Common myeloid progenitor, CD34-positive (primary cell): ENCODE measurements at regions of chr14 and their contacts with region 1.

Region 1: DNA sequence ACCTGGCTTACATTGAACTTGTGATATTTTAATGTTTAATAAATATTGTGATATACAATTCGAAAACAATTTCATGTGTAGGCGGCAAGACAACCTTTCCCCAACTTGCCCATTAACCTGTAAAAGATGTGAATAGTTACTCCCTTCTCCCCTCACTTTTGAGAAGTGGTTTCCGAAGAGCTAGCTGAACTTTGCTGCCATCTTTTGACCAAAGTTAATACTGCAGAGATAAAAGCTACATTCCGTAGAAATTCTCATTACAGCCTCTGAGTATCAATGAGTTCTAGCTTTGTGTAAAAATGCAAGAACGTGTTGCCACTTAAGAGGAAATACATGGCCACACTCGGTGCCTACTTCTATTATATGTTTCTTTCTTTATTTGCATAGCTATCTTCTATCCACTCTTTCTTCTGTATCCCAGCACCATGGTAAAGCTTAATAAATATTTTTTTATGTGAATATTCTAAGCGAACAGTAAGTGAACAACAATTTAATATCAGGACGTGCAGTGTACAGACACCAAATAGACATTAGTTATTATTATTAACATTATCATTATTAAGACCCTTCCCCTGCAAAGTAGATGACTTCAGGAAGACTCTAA is 105.1 kb upstream of the TMEM260 start:
- DNase-seq: peak; percentile 44 to 72 (median 64)
- H3K4me3 ChIP-seq: no peak overlapping the region
- H3K27ac ChIP-seq: no peak overlapping the region
- H3K4me1 ChIP-seq: no peaks in the 10 kb centered on the region
- H3K27me3 ChIP-seq: no peaks in the 10 kb centered on the region

Region 2: GRCh38 chr14:55707365-55707804 is 767.1 kb before region 1 on chr14:
- CTCF ChIA-PET with region 1: interaction called, 31 read pairs
- POLR2A ChIA-PET with region 1: no interaction called
- DNase-seq: peak; percentile 40 to 66 (median 65)
- H3K4me3 ChIP-seq: no peak overlapping the region
- H3K27ac ChIP-seq: no peak overlapping the region
- H3K4me1 ChIP-seq: no peaks in the 10 kb centered on the region
- H3K27me3 ChIP-seq: no peaks in the 10 kb centered on the region

Region 3: DNA sequence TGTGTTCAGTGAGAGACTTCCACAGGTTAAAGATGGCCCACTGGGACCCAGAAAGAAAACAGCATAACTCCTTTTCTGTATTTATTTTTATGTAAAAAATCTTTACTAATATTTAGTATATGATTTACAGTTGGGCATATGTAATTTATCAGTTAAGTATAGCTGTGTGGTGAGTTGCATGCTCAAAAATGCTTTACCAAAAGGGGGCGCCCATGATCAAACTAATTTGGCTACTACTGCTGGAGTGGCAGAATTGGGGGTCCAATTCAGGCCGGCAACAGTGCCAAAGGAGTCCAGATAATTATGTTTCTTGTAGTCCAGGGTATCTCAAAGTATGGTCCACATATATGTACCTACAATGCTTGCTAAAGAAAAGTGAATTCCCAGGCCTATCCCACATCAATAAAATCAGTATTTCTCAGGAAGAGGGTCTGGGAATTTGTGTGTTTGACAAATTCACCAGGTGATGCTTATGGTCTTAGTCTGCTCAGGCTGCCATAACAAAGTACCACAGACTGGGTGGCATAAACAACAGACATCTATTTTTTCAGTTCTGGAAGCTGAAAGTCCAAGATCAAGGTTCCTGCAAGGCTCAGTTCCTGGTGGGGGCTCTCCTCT is 742.5 kb before region 1 on chr14:
- CTCF ChIA-PET with region 1: interaction called, 33 read pairs
- POLR2A ChIA-PET with region 1: no interaction called
- DNase-seq: peak; percentile 44 to 68 (median 56)
- H3K4me3 ChIP-seq: no peak overlapping the region
- H3K27ac ChIP-seq: no peak overlapping the region
- H3K4me1 ChIP-seq: peaks cover 0 to 7% (median 4%) of the 10 kb centered on the region in 4 experiments
- H3K27me3 ChIP-seq: no peaks in the 10 kb centered on the region

Region 4: DNA sequence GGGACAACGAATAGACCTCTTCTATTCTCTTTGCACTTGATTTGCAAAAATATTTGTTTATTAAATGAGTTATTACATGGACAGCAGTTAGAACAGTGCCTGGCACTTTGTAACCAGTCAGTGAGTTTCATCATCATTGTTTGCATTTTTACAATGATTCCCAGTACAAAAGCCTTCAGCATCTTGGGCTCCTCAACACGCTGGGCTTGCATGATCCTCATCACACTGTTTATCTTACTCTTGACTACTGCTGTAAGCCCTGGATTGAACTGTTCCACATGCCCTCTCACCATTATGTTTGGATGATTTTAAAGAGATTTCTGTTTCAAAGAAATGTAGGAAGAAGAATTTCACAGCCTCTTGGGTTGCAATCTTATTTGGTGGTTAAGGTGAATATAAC is 152.0 kb before region 1 on chr14:
- CTCF ChIA-PET with region 1: no interaction called
- POLR2A ChIA-PET with region 1: no interaction called
- DNase-seq: no peak
- H3K4me3 ChIP-seq: no peak overlapping the region
- H3K27ac ChIP-seq: no peak overlapping the region
- H3K4me1 ChIP-seq: peaks cover 0 to 4% (median 2%) of the 10 kb centered on the region in 4 experiments
- H3K27me3 ChIP-seq: no peaks in the 10 kb centered on the region

Region 5: DNA sequence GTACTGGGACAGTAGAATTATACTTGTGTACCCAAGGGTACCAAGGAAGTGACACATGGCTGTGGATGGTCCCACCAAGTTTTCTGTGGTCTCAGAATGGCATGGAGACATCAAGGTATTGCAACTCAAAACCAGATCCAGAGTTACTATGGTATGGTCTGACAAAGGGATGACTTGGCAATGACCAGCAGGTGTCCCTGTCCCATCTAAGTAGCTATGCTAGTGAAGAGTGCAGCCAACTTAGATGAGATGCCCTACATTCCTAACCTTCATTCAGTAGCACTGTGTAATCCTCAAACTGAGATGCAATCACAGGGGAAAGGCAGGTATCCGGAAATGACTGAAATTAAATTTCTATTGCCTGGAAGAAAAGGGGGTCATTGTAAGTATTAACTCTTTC is 83.7 kb before region 1 on chr14:
- CTCF ChIA-PET with region 1: interaction called, 15 read pairs
- POLR2A ChIA-PET with region 1: no interaction called
- DNase-seq: peak; percentile 31 to 62 (median 53)
- H3K4me3 ChIP-seq: no peak overlapping the region
- H3K27ac ChIP-seq: no peak overlapping the region
- H3K4me1 ChIP-seq: no peaks in the 10 kb centered on the region
- H3K27me3 ChIP-seq: no peaks in the 10 kb centered on the region

Region 6: GRCh38 chr14:56487090-56487667 is 12.7 kb after region 1 on chr14:
- CTCF ChIA-PET with region 1: interaction called, 20 read pairs
- POLR2A ChIA-PET with region 1: no interaction called
- DNase-seq: no peak
- H3K4me3 ChIP-seq: no peak overlapping the region
- H3K27ac ChIP-seq: no peak overlapping the region
- H3K4me1 ChIP-seq: peaks cover 0 to 5% (median 0%) of the 10 kb centered on the region in 4 experiments
- H3K27me3 ChIP-seq: peaks cover 0 to 1% (median 0%) of the 10 kb centered on the region in 5 experiments

Region 7: DNA sequence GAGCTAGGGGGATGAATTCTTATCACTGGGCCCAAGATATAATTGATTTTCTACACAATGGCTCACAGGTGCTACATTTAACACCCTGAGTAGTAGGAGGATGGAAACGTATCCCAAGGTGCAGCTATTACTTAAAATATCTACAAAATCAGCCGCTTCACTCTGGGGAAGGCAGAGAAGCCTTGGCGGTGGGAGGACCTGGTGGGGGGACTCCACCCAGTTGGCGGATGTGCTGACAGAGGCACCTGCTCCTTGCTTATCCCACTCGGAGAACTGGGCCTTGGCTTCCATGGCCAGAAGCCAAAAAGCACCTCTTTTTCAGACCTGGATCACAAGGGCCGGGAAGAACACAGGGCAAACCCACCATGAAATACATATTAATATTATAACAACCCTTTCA is 229.4 kb after region 1 on chr14:
- CTCF ChIA-PET with region 1: no interaction called
- POLR2A ChIA-PET with region 1: no interaction called
- DNase-seq: no peak
- H3K4me3 ChIP-seq: no peak overlapping the region
- H3K27ac ChIP-seq: no peak overlapping the region
- H3K4me1 ChIP-seq: no peaks in the 10 kb centered on the region
- H3K27me3 ChIP-seq: peaks cover 0 to 20% (median 4%) of the 10 kb centered on the region in 5 experiments